ENCODE measurements at regions of chr19 and their contacts with region 1.

Region 1: GRCh38 chr19:12000152-12000981 is 35.1 kb downstream of the ZNF433 start:
- DNase-seq: peak; percentile 57
- ATAC-seq: peak; percentile 96
- H3K4me3 Mint-ChIP-seq: no peak overlapping the region
- H3K27ac Mint-ChIP-seq: peak overlapping the region; percentile 81
- H3K4me1 Mint-ChIP-seq: peaks cover 23% of the 10 kb centered on the region
- H3K27me3 Mint-ChIP-seq: no peaks in the 10 kb centered on the region

Region 2: GRCh38 chr19:12035220-12036153 is 35.1 kb after region 1 on chr19 and contains the start of gene ZNF433:
- CTCF ChIA-PET with region 1: no interaction called
- POLR2A ChIA-PET with region 1: no interaction called
- intact Hi-C with region 1: loop called (anchors 2 to 5 kb)
- DNase-seq: peak; percentile 89
- ATAC-seq: peak; percentile 97
- H3K4me3 Mint-ChIP-seq: peak within 1 kb of the TSS; percentile 77
- H3K27ac Mint-ChIP-seq: peak within 1 kb of the TSS; percentile 82
- H3K4me1 Mint-ChIP-seq: peaks cover 9% of the 10 kb centered on the region
- H3K27me3 Mint-ChIP-seq: peaks cover 3% of the 10 kb centered on the region
- total RNA-seq, gene ZNF433: 1.2 to 1.5 TPM

Region 3: DNA sequence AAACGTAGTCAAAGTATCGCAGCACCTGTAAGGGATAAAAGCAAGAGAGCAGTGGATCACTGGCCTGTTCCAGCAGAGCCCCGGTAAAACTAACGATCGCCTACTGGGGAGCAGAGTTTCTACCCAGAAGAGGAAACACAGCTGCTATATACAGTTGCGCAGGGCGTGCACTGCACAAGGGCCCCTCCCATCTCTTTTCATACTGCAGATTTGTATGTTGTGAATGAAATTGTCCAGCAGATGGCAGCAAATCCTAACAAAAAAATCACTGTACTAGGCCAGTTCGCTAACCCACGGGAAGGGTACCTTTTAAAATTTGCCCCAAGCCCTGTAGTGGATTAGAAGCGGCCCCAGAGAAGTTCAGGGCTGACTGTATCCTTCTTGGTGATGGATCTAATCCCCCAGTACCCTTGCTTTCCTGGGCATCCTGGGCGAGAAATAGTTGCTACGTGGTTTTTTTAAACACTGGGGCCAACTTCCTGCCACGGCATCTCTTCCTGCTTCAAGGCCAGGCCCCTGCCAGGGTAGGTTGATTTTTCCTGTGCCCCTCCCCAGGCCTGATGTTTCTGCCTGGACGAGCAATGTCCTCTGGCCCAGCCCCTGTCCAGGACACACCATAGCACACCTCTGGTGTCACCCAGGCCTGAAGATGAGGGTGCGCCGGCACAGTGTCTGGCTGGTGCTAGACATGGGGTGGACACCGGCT is 1276.9 kb after region 1 on chr19:
- CTCF ChIA-PET with region 1: no interaction called
- POLR2A ChIA-PET with region 1: no interaction called
- intact Hi-C with region 1: no loop called
- DNase-seq: peak; percentile 76
- ATAC-seq: peak; percentile 96
- H3K4me3 Mint-ChIP-seq: no peak overlapping the region
- H3K27ac Mint-ChIP-seq: peak overlapping the region; percentile 86
- H3K4me1 Mint-ChIP-seq: peaks cover 13% of the 10 kb centered on the region
- H3K27me3 Mint-ChIP-seq: no peaks in the 10 kb centered on the region